ENCODE measurements at regions of chr2 and their contacts with region 1.

Region 1: DNA sequence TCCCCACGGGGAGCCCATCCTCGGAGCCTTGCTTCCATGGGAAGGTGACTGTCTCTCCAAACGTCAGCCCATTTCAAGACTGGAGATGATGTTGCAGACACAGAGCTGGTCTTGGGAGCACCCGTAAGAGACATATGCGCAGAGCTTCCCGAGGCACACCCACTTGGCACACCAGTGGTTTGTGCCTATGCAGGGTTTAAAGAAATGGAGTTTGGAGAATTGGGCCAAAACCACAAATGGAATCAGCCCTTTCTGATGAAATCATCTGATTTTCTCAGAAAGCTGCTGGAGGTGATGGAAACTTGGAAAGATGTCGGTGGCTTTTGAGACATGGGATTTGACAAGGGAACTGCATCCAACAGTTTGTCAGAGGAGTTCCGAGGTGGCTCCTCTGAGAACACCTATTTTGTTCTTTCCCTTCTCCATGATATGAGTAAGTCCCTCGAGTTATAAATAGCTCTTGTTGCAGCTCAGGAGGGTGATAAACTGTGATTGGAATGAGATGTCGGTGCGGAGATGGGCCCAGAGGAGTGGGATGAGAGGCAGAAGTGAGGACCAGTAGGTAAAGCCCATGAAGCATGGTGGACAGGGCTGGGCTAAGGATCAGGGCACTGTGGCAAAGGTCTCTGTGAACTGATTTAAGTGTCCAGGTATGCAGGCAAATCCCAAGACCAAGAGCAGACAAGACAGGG is 225.7 kb downstream of the ACKR3 start:
- DNase-seq: no peak
- H3K4me3 ChIP-seq: no peak overlapping the region
- H3K27ac ChIP-seq: no peak overlapping the region
- H3K4me1 ChIP-seq: no peaks in the 10 kb centered on the region
- H3K27me3 ChIP-seq: no peaks in the 10 kb centered on the region
- CTCF ChIP-seq: no peak

Region 2: GRCh38 chr2:236459393-236459792 is 335.9 kb before region 1 on chr2:
- CTCF ChIA-PET with region 1: no interaction called
- dilution Hi-C with region 1: loop called (anchors 5 kb)
- in situ Hi-C with region 1: no loop called
- intact Hi-C with region 1: no loop called
- DNase-seq: no peak
- H3K4me3 ChIP-seq: no peak overlapping the region
- H3K27ac ChIP-seq: no peak overlapping the region
- H3K4me1 ChIP-seq: no peaks in the 10 kb centered on the region
- H3K27me3 ChIP-seq: no peaks in the 10 kb centered on the region
- CTCF ChIP-seq: no peak

Region 3: DNA sequence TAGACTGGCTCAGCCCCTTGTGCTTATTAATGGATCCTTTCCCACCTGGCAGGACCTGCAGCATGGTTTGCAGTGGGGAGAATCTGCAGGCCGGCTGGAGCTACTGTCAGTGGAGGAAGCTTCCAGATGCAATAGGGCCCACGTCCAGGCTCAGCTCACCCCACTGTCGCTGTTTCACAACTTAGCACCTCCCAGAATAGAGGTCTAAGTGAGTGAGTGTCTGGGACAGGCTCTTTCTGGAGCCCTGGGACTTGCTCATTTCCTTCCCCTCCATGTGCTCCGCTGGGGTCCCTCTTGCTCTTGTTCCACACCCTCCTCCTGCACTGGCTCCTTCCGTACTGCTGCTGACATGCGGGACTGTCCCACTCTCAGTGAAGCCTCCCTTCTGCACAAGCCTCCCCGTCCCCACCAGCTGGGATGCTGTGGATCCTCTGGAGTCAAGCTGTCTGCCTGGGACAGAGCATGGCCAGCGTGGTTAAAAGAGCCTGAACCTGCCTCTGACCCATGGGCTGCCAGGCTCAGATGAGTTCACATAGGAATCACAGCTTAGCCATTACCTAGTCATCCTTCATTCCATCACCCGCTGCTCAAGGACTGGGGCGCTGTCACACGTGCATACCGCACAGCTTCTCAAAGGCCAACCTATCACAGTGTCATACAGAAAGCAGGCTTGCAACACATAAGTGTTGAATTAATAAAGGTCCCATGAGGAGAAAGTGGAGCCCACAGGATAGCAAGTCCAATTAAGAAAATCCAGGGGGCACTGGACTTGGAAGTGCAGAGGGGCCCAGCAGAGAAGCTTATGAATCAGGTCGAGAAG is 89.8 kb before region 1 on chr2:
- CTCF ChIA-PET with region 1: no interaction called
- dilution Hi-C with region 1: loop called (anchors 5 kb)
- in situ Hi-C with region 1: no loop called
- intact Hi-C with region 1: no loop called
- DNase-seq: no peak
- H3K4me3 ChIP-seq: no peak overlapping the region
- H3K27ac ChIP-seq: no peak overlapping the region
- H3K4me1 ChIP-seq: no peaks in the 10 kb centered on the region
- H3K27me3 ChIP-seq: no peaks in the 10 kb centered on the region
- CTCF ChIP-seq: no peak